ENCODE measurements at regions of chr1 and their contacts with region 1.

Region 1: DNA sequence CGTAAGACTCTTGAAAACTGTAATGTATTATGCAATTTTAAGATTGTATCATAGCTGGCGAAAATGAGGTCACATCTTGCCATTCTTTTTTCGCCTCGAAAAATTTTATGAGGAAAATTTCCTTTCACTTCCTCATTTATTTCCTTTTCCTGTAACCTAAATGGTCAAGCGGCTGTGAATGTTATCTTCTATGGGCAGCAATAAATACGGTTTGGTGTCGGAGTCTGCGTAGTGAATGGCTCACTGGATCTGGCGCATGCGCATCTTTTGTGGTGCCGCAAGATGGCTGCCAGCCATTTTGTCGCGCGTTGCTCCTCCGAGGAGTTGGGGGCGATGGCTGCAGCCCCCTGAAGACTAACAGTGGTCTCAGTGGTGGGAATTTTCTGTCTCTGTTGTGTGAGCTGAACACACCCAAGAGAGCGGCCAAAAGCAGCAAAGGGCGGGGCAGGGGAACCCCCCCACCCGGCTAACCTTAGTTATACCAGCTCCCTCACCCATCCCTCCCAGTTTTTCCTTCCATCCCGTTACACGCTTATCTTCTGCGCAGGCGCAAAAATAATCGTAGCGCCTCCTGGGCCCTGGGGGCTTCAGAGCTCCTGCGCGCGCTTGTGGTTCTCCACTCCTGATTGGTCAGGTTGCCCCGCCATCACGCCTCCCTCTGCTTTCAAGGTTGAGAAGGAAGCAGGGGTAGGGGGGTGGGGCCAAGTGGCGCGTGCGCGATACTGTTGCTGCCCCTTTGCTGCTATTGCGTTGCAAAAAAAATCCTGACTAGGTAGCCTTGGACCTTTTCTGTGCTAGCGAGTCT is at the start of gene RPRD2:
- DNase-seq: peak; percentile 97 to 100 (median 99)

Region 2: DNA sequence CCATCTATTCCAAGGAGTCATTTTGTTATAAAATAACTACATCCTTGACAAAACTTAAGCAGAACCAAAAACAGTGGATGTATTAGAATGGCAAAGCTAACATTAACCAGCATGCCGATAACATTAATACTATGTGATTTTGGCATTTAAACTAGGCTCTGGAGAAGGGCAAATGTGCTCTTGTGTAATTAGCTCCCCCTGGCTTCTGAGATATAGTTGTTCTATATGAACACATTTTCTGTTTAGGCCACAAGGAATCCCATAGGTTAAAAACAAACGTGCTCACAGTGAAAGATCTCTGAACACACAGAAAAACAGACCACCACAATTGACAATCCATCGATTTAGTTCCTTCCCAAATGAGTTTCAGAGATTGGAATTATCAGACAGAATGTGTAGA is 66.2 kb after region 1 on chr1:
- intact Hi-C with region 1: loop called (anchors 10 kb)
- DNase-seq: no peak

Measured in posterior cingulate gyrus (tissue), 11 donors.